Common myeloid progenitor, CD34-positive (primary cell): ENCODE measurements at regions of chr12 and their contacts with region 1.

Region 1: DNA sequence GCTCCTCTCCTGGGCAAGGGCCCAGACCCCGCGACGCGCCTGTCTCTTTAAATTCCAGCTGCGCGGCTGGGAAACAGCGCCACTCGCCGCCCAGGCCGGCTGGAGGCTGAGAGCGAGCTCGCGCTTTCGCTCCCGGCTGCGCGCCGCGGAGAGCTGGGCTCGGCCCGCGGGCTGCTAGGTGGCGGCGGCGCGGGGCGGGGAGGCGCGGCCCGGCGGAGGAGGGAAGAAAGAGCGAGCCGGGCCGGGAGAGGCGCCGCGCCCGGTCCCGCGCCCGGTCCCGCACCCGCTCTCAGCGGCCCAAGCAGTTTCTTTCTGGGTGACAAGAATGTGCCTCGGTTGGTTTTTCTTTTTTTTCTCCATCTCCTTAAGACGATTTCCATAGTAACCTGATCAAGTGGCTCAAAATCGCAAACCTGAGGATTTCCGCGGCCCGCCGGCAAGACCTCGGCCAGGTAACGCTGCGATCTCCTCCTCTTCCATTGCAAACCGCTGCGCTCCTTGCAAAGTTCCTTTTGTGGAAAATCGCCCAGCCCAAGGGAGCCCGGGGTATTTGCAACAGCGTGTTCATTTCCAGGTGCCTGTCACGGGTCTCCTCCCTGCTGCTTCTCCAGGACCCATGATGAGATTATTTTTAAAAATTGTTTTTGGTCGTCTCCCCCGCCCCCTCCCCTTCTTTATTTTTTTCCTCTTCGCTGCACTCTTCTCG is 259.5 kb upstream of the E2F7 start:
- DNase-seq: peak; percentile 56 to 77 (median 71)
- H3K4me3 ChIP-seq: peak overlapping the region; percentile 39 to 85 (median 61)
- H3K27ac ChIP-seq: no peak overlapping the region
- H3K4me1 ChIP-seq: peaks cover 0 to 17% (median 9%) of the 10 kb centered on the region in 4 experiments
- H3K27me3 ChIP-seq: peaks cover 3 to 26% (median 10%) of the 10 kb centered on the region in 5 experiments

Region 2: GRCh38 chr12:77314378-77315052 is 10.4 kb before region 1 on chr12:
- CTCF ChIA-PET with region 1: interaction called, 14 read pairs
- POLR2A ChIA-PET with region 1: no interaction called
- DNase-seq: no peak
- H3K4me3 ChIP-seq: no peak overlapping the region
- H3K27ac ChIP-seq: no peak overlapping the region
- H3K4me1 ChIP-seq: no peaks in the 10 kb centered on the region
- H3K27me3 ChIP-seq: no peaks in the 10 kb centered on the region